IMR-90 (cell line): ENCODE measurements at regions of chr3 and their contacts with region 1.

Region 1: DNA sequence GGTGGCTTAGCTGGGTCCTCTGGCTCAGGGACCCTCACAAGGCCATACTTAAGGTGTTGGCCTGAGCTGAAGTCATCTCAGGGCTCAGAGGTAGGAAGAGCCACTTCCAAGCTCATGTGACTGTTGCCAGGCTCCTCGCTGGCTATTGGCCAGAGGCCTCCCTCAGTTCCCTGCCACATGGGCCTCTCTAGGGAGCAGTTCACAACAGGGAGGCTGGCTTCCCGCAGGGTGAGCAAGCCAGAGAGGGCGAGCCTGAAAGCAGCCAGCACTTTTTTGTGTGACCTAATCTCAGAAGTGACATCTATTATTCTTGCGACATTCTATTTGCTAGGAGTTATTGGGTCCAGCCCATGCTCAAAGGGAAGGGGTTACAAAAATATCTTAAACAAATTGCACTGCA is 201.4 kb downstream of the SSR3 start:
- DNase-seq: no peak
- ATAC-seq: no peak
- H3K4me3 ChIP-seq: no peak overlapping the region
- H3K27ac ChIP-seq: no peak overlapping the region
- H3K4me1 ChIP-seq: no peaks in the 10 kb centered on the region
- H3K27me3 ChIP-seq: peaks cover 6% of the 10 kb centered on the region
- CTCF ChIP-seq: no peak
- POLR2A ChIP-seq: no peak
- RAD21 ChIP-seq: no peak

Region 2: GRCh38 chr3:156334841-156335564 is 18.5 kb before region 1 on chr3:
- CTCF ChIA-PET with region 1: interaction called, 5 read pairs
- POLR2A ChIA-PET with region 1: interaction called, 10 read pairs
- dilution Hi-C with region 1: no loop called
- in situ Hi-C with region 1: no loop called
- intact Hi-C with region 1: no loop called
- DNase-seq: no peak
- ATAC-seq: no peak
- H3K4me3 ChIP-seq: no peak overlapping the region
- H3K27ac ChIP-seq: no peak overlapping the region
- H3K4me1 ChIP-seq: no peaks in the 10 kb centered on the region
- H3K27me3 ChIP-seq: no peaks in the 10 kb centered on the region; the same call in 1 of the 2 replicates
- CTCF ChIP-seq: no peak
- POLR2A ChIP-seq: no peak
- RAD21 ChIP-seq: no peak

Region 3: GRCh38 chr3:156341831-156342416 is 11.6 kb before region 1 on chr3:
- CTCF ChIA-PET with region 1: interaction called, 4 read pairs
- POLR2A ChIA-PET with region 1: no interaction called
- dilution Hi-C with region 1: no loop called
- in situ Hi-C with region 1: no loop called
- intact Hi-C with region 1: loop called (anchors 1 kb)
- DNase-seq: no peak
- ATAC-seq: no peak
- H3K4me3 ChIP-seq: no peak overlapping the region
- H3K27ac ChIP-seq: no peak overlapping the region
- H3K4me1 ChIP-seq: no peaks in the 10 kb centered on the region
- H3K27me3 ChIP-seq: peaks cover 3% of the 10 kb centered on the region; the same call in 1 of the 2 replicates
- CTCF ChIP-seq: no peak
- POLR2A ChIP-seq: no peak
- RAD21 ChIP-seq: no peak

Region 4: GRCh38 chr3:156873906-156874305 is 520.4 kb after region 1 on chr3:
- CTCF ChIA-PET with region 1: no interaction called
- POLR2A ChIA-PET with region 1: no interaction called
- dilution Hi-C with region 1: no loop called
- in situ Hi-C with region 1: no loop called
- intact Hi-C with region 1: loop called (anchors 5 kb)
- DNase-seq: no peak
- ATAC-seq: no peak
- H3K4me3 ChIP-seq: no peak overlapping the region
- H3K27ac ChIP-seq: no peak overlapping the region
- H3K4me1 ChIP-seq: no peaks in the 10 kb centered on the region
- H3K27me3 ChIP-seq: no peaks in the 10 kb centered on the region
- CTCF ChIP-seq: no peak
- POLR2A ChIP-seq: no peak
- RAD21 ChIP-seq: no peak